H1 (cell line): ENCODE measurements at regions of chr11 and their contacts with region 1.

Region 1: DNA sequence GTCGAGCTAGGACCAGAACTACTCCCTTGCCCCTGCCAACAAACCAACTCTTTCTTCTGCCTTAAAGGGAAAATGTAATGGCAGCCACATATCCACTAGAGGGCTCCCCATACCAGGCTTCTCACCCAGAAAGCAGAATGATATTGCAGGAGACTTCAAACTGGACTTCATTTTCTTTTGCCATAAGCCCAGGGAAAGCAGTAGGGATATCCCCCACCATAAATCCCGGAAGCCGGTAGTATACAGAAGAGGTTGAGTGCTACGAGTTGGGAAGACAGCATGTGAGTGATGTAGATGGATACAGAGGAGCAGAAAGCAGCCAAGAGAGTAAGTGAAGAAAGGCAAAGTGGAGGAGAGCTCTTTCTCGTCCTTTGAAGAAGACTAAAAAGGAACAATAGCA is 12.1 kb downstream of the PLAAT5 start:
- DNase-seq: peak; percentile 23 to 60
- H3K4me3 ChIP-seq: no peak overlapping the region
- H3K27ac ChIP-seq: no peak overlapping the region
- H3K4me1 ChIP-seq: peaks cover 0 to 5% (median 2%) of the 10 kb centered on the region in 4 experiments; a peak in 2 of 7 replicates
- H3K27me3 ChIP-seq: no peaks in the 10 kb centered on the region
- CTCF ChIP-seq: peak in 2 of 3 experiments; percentile 90 to 91; a peak in 3 of 4 replicates
- EP300 ChIP-seq: no peak
- POLR2A ChIP-seq: no peak
- RAD21 ChIP-seq: peak; percentile 98 to 100

Region 2: GRCh38 chr11:63404161-63404935 is 74.5 kb before region 1 on chr11:
- CTCF ChIA-PET with region 1: no interaction called
- POLR2A ChIA-PET with region 1: no interaction called
- DNase-seq: no peak
- H3K4me3 ChIP-seq: no peak overlapping the region
- H3K27ac ChIP-seq: no peak overlapping the region
- H3K4me1 ChIP-seq: no peaks in the 10 kb centered on the region
- H3K27me3 ChIP-seq: no peaks in the 10 kb centered on the region
- CTCF ChIP-seq: no peak
- EP300 ChIP-seq: no peak
- POLR2A ChIP-seq: no peak
- RAD21 ChIP-seq: no peak

Region 3: DNA sequence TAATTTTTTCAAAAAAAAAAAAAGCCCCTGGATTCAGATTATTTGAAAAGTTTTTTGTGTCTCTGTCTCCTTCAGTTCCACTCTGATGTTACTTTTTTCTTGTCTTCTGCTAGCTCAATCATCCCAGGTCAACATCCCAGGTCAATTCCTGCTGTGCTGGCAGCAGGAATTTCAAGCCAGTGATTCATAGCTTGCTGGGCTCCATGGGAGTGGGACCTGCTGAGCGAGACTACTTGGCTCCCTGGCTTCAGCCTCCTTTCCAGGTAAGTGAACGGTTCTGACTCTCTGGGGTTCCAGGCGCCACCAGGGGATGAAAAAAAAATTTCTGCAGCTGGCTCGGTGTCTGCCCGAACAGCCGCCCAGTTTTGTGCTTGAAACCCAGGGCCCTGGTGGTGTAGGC is 19.3 kb before region 1 on chr11:
- CTCF ChIA-PET with region 1: interaction called, 14 read pairs
- POLR2A ChIA-PET with region 1: no interaction called
- DNase-seq: peak in 1 of 2 experiments; percentile 46
- H3K4me3 ChIP-seq: no peak overlapping the region
- H3K27ac ChIP-seq: no peak overlapping the region
- H3K4me1 ChIP-seq: peaks cover 0 to 6% (median 3%) of the 10 kb centered on the region in 4 experiments; a peak in 3 of 7 replicates
- H3K27me3 ChIP-seq: no peaks in the 10 kb centered on the region
- CTCF ChIP-seq: no peak
- EP300 ChIP-seq: no peak
- POLR2A ChIP-seq: no peak
- RAD21 ChIP-seq: no peak

Region 4: GRCh38 chr11:63508009-63508408 is 29.1 kb after region 1 on chr11:
- CTCF ChIA-PET with region 1: interaction called, 97 read pairs
- POLR2A ChIA-PET with region 1: interaction called, 4 read pairs
- DNase-seq: peak in 1 of 2 experiments; percentile 54
- H3K4me3 ChIP-seq: no peak overlapping the region
- H3K27ac ChIP-seq: no peak overlapping the region
- H3K4me1 ChIP-seq: peaks cover 9 to 21% (median 15%) of the 10 kb centered on the region in 4 experiments
- H3K27me3 ChIP-seq: no peaks in the 10 kb centered on the region
- CTCF ChIP-seq: peak; percentile 62 to 71 (median 71)
- EP300 ChIP-seq: no peak
- POLR2A ChIP-seq: no peak
- RAD21 ChIP-seq: peak; percentile 71 to 82

Region 5: GRCh38 chr11:63536669-63537292 is 57.9 kb after region 1 on chr11 and contains the start of gene PLAAT4:
- CTCF ChIA-PET with region 1: interaction called, 20 read pairs
- POLR2A ChIA-PET with region 1: interaction called, 3 read pairs
- DNase-seq: no peak
- H3K4me3 ChIP-seq: no peak within 1 kb of the TSS
- H3K27ac ChIP-seq: no peak within 1 kb of the TSS
- H3K4me1 ChIP-seq: peaks cover 4 to 13% (median 10%) of the 10 kb centered on the region in 4 experiments; a peak in 6 of 7 replicates
- H3K27me3 ChIP-seq: no peaks in the 10 kb centered on the region
- CTCF ChIP-seq: no peak
- EP300 ChIP-seq: no peak
- POLR2A ChIP-seq: no peak
- RAD21 ChIP-seq: no peak
- total RNA-seq, gene PLAAT4: 2.6 and 2.8 TPM in 2 replicates

Region 6: GRCh38 chr11:63608351-63609038 is 129.6 kb after region 1 on chr11:
- CTCF ChIA-PET with region 1: interaction called, 16 read pairs
- POLR2A ChIA-PET with region 1: interaction called, 4 read pairs
- DNase-seq: no peak
- H3K4me3 ChIP-seq: no peak overlapping the region
- H3K27ac ChIP-seq: no peak overlapping the region
- H3K4me1 ChIP-seq: peaks cover 12 to 31% (median 15%) of the 10 kb centered on the region in 4 experiments
- H3K27me3 ChIP-seq: no peaks in the 10 kb centered on the region
- CTCF ChIP-seq: no peak
- EP300 ChIP-seq: no peak
- POLR2A ChIP-seq: no peak
- RAD21 ChIP-seq: no peak

Region 7: GRCh38 chr11:63629426-63629825 is 150.5 kb after region 1 on chr11:
- CTCF ChIA-PET with region 1: interaction called, 26 read pairs
- POLR2A ChIA-PET with region 1: no interaction called
- DNase-seq: no peak
- H3K4me3 ChIP-seq: no peak overlapping the region
- H3K27ac ChIP-seq: no peak overlapping the region
- H3K4me1 ChIP-seq: no peaks in the 10 kb centered on the region
- H3K27me3 ChIP-seq: no peaks in the 10 kb centered on the region
- CTCF ChIP-seq: no peak
- EP300 ChIP-seq: no peak
- POLR2A ChIP-seq: no peak
- RAD21 ChIP-seq: no peak